Adrenal gland (tissue), 19 donors: ENCODE measurements at regions of chr17 and their contacts with region 1.

Region 1: DNA sequence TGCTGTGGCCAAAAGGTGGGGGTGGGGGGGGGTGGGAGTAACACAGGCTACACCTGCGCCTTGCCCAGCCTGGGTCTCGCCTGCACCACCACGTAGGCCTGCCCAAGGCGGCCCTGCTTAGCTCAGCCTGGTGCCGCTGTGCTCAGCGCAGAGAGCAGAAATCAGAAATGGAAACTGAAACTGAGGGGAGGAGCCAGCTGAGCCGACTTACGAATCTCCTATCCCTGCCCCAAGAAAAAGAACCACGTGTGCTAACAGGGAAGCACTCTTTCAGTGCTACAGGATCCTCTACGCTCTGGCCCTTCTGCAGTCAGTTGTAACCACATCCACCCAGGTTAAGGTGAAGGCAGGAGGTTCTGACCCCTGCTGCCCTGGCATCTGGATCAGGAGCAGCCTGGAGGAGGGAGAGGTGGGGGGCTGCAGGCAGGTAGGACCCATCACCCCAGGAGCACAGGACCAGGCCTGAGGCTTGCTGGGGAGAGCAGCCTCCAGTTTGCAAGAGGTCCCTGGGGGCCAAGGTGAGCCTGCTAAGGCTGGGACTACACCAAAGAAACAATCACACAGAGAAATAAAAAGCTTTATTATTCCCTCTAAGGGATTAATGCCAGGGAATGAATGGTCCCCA is at the start of gene DHX58:
- DNase-seq: peak; percentile 68 to 91 (median 83)
- H3K4me3 ChIP-seq: peak within 1 kb of the TSS; percentile 6 to 74 (median 57)
- H3K27ac ChIP-seq: peak within 1 kb of the TSS; percentile 88 to 93 (median 90)
- H3K4me1 ChIP-seq: peaks cover 23 to 35% of the 10 kb centered on the region in 2 donors
- H3K27me3 ChIP-seq: no peaks in the 10 kb centered on the region
- CTCF ChIP-seq: no peak
- POLR2A ChIP-seq: peak; percentile 46 to 81
- total RNA-seq, gene DHX58: 17.9 to 40.8 (median 31.2) TPM

Region 2: GRCh38 chr17:41962768-41963434 is 149.8 kb before region 1 on chr17:
- intact Hi-C with region 1: loop called (anchors 2 to 5 kb)
- DNase-seq: peak; percentile 63 to 89 (median 78)
- H3K4me3 ChIP-seq: no peak overlapping the region
- H3K27ac ChIP-seq: no peak overlapping the region
- H3K4me1 ChIP-seq: peaks cover 13 to 20% of the 10 kb centered on the region in 2 donors
- H3K27me3 ChIP-seq: no peaks in the 10 kb centered on the region
- CTCF ChIP-seq: peak; percentile 73 to 94 (median 87)
- POLR2A ChIP-seq: no peak

Region 3: GRCh38 chr17:42027961-42028790 is 84.5 kb before region 1 on chr17:
- intact Hi-C with region 1: loop called (anchors 5 kb)
- DNase-seq: no peak
- H3K4me3 ChIP-seq: no peak overlapping the region
- H3K27ac ChIP-seq: no peak overlapping the region
- H3K4me1 ChIP-seq: peaks cover 3 to 16% of the 10 kb centered on the region in 2 donors
- H3K27me3 ChIP-seq: no peaks in the 10 kb centered on the region
- CTCF ChIP-seq: no peak
- POLR2A ChIP-seq: no peak

Region 4: DNA sequence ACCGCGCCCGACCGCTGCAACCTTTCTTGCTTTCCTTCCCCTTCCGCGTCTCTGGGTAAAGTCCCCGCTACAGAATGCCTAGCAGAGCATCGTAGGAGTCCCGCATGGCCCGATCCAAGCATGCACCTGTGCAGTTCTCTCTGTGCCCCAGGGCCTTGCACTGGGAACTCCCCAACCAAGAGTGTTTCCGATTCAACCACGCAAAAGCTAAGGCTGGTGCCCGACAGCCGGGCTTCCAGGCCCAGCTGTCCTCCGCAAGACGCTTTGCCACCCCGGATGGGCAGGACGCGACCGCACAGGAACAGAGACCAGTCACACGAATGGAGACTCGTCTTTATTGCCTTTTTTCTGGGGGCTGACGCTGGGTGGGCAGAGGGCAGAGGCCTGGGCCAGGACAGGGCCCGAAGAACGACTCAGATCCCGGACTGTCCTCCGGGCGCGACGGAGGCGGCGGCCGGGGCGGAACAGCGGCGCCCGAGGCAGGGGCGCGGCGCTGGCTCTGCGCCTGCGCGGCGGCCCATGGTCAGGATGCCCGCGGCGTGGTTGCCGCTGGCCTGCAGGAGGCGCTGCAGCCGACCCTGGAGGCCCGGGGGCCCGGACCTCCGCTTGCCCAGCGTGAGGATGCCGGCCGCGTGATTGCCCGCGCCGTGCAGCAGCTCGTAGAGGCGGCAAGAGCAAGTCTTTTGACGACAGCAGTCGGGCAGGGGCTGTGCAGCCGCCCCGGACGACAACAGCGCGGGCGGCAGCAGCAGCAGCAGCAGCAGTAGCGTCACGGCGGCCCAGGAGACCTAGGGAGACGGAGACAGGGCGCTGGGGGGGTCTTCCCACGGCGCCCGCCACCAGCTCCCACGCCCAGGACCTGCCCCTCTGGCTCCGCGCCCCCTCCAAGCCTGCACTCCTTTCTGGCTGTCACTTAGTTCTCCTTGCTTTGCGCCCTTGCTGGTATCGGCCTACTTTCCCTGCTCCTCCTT is 71.4 kb after region 1 on chr17:
- intact Hi-C with region 1: loop called in 1 of 2 experiments (anchors 5 kb)
- DNase-seq: peak; percentile 74 to 86 (median 80)
- H3K4me3 ChIP-seq: peak overlapping the region in 2 of 4 donors; percentile 25 to 66
- H3K27ac ChIP-seq: peak overlapping the region in 4 of 5 donors; percentile 29 to 77 (median 53)
- H3K4me1 ChIP-seq: peaks cover 15 to 37% of the 10 kb centered on the region in 2 donors
- H3K27me3 ChIP-seq: no peaks in the 10 kb centered on the region
- CTCF ChIP-seq: peak; percentile 32 to 93 (median 67)
- POLR2A ChIP-seq: peak in 1 of 2 donors; percentile 41

Region 5: GRCh38 chr17:42248351-42249179 is 135.9 kb after region 1 on chr17:
- intact Hi-C with region 1: no loop called
- DNase-seq: peak; percentile 82 to 97 (median 94)
- H3K4me3 ChIP-seq: peak overlapping the region in 1 of 4 donors; percentile 41
- H3K27ac ChIP-seq: peak overlapping the region; percentile 56 to 96 (median 90)
- H3K4me1 ChIP-seq: peaks cover 28 to 83% of the 10 kb centered on the region in 2 donors
- H3K27me3 ChIP-seq: no peaks in the 10 kb centered on the region
- CTCF ChIP-seq: no peak
- POLR2A ChIP-seq: peak; percentile 56 to 93